AG04450 (cell line): ENCODE measurements at regions of chr11 and their contacts with region 1.

Region 1: GRCh38 chr11:113305440-113306336 is 8.7 kb upstream of the TTC12 start:
- DNase-seq: peak; percentile 21
- H3K4me3 ChIP-seq: no peak overlapping the region
- H3K27ac ChIP-seq: no peak overlapping the region
- H3K27me3 ChIP-seq: peaks cover 11% of the 10 kb centered on the region
- CTCF ChIP-seq: peak; percentile 98

Region 2: GRCh38 chr11:113249491-113249763 is 56.3 kb before region 1 on chr11:
- CTCF ChIA-PET with region 1: no interaction called
- POLR2A ChIA-PET with region 1: no interaction called
- DNase-seq: no peak
- H3K4me3 ChIP-seq: no peak overlapping the region
- H3K27ac ChIP-seq: no peak overlapping the region
- H3K27me3 ChIP-seq: peaks cover 2% of the 10 kb centered on the region
- CTCF ChIP-seq: 0 out of 2 replicates have a peak, but pooled peaks have one; percentile 23

Region 3: DNA sequence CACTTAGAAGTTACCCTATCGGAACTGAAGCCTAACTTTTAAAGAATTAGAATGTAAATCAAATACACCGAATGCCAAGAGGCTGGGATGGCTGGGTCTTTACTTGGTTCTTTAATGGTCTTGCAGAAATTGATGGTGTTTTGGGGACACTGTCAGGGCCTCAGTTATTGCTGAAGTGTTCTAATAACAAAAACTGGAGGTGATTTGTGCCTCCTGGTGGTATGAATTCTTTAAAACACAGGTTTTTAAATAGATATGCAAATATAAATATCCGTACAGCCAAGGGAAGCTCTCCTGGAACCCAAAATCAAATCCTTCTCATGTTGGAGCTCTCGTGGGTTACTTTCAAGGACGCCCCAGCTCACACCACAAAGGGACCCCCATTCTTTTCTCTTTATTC is 419.7 kb after region 1 on chr11:
- CTCF ChIA-PET with region 1: interaction called, 88 read pairs
- POLR2A ChIA-PET with region 1: no interaction called
- DNase-seq: no peak
- H3K4me3 ChIP-seq: no peak overlapping the region
- H3K27ac ChIP-seq: no peak overlapping the region
- H3K27me3 ChIP-seq: no peaks in the 10 kb centered on the region
- CTCF ChIP-seq: no peak